ENCODE measurements at regions of chr1 and their contacts with region 1.

Region 1: DNA sequence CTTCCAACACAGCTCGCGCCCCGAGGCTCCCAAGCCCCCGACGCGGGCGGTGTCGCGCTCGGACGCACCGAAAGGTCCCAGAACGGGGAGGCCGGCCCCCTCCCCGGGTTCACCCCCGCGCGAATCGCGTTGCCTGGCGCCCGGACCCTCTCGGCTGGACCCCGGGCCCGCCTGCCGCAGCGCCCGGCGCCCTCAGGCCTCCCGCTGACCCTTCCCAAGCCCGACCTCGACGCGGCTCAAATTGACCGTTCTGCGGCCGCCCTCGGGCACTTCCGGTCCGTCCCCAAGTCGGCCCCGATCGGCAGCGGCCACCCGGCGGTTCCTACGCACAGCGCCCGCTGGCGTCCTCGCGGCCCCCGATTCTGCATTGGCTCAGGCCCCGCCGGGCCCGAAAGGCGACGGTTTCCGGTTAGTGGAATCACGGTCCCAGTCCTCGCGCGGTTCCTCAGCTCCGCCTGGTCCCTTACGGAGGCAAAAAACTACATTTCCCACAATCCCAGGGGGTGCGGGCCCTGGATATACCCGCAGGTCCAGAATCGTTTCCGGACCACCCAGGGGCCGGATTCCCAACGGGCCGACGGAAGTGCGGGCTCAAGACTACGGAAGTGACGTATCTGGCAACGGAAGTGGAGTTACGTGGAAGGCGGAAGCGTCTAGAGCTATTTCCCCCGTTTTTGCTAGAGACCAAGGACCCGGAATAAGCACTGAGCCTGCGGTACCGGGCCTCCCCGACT is at the start of gene AURKAIP1:
- DNase-seq: peak; percentile 100
- H3K4me3 ChIP-seq: peak within 1 kb of the TSS; percentile 81 to 88 (median 84)
- H3K27ac ChIP-seq: peak within 1 kb of the TSS; percentile 71
- H3K4me1 ChIP-seq: peaks cover 13% of the 10 kb centered on the region
- H3K27me3 ChIP-seq: no peaks in the 10 kb centered on the region
- CTCF ChIP-seq: peak; percentile 24 to 45
- POLR2A ChIP-seq: peak; percentile 53
- total RNA-seq, gene AURKAIP1: 149 and 151 TPM in 2 replicates

Region 2: DNA sequence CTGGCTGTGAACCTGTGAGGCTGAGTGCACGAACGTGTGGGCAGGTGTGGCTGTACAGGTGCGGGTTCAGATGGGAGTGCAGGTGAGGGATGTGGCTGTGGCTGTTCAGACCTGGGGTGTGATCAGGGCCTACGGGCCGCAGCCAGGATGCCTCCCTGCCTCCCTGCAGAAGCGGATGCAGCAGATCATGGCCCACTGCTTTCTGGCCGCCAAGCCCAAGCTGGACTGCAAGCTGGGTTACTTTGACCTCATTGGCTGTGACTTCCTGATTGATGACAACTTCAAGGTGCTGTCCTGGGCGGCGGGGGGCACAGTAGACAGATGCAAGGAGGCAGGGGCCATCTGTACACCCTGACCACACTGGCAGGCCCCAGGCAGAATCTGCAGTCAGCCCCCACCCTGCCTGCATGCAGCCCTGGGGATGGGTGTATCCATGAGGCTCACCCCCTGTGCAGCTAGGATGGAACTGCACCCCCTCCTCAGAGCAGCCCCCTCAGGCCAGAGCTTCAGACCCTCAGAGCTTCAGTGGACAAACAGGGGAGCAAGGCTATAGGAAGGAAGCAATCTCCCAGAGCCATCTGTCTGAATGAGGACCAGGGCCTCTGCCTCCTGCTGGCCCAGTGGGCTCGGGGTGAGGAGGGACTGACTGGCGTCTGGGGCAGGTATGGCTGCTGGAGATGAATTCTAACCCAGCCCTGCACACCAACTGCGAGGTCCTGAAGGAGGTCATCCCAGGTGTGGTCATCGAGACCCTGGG is 178.5 kb before region 1 on chr1:
- CTCF ChIA-PET with region 1: no interaction called
- POLR2A ChIA-PET with region 1: no interaction called
- dilution Hi-C with region 1: no loop called
- intact Hi-C with region 1: no loop called
- DNase-seq: no peak
- H3K4me3 ChIP-seq: no peak overlapping the region
- H3K27ac ChIP-seq: no peak overlapping the region
- H3K4me1 ChIP-seq: no peaks in the 10 kb centered on the region
- H3K27me3 ChIP-seq: peaks cover 0 to 1% of the 10 kb centered on the region in 2 experiments
- CTCF ChIP-seq: no peak
- POLR2A ChIP-seq: no peak

Region 3: GRCh38 chr1:1307908-1308755 is 67.0 kb before region 1 on chr1 and contains the starts of genes ACAP3 and PUSL1:
- CTCF ChIA-PET with region 1: interaction called, 3 read pairs
- POLR2A ChIA-PET with region 1: no interaction called
- dilution Hi-C with region 1: no loop called
- intact Hi-C with region 1: loop called (anchors 1 kb)
- DNase-seq: peak; percentile 80
- H3K4me3 ChIP-seq: peak within 1 kb of the TSS; percentile 56 to 94 (median 66)
- H3K27ac ChIP-seq: peak within 1 kb of the TSS; percentile 65
- H3K4me1 ChIP-seq: peaks cover 15% of the 10 kb centered on the region
- H3K27me3 ChIP-seq: no peaks in the 10 kb centered on the region
- CTCF ChIP-seq: no peak
- POLR2A ChIP-seq: peak; percentile 44
- total RNA-seq, gene ACAP3: 39.0 and 43.0 TPM in 2 replicates
- total RNA-seq, gene PUSL1: 16.6 and 18.8 TPM in 2 replicates

Region 4: DNA sequence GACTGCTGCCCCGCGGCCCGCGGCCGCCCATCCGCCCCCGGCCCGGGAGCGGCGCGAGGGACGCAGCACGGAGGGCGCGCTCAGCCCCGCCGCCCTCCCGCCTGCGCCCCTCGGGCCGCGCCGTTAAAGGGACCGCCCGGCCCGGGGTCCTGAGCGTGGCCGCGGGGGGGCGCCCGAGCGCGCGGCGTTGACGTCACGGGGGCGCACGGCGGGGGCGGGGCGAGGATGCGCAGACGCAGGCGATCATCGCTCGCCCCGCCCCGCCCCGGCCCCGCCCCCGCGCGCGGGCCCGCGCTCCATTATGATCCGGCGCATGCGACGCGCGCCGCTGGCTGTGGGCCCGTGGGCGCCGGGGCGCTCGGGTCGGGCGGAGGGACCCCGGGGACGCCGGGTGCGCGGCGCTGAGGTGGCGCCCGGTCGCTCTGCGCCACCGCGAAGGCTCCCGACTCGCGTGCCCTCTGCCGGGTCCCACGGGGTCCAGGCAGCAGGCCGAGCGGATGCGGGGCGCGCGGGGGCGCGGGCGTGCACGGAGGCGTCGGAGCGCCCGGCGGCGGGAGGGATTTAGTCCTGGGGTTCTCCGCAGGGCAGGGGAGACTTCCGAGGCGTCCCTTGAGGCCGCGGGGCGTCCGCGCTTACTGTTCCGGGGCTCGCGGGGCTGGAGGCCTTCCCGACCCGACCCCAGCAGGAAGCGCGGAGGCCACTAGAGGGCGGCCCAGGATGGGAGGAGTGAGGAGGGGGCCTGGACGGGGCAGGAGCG is 25.7 kb before region 1 on chr1 and contains the start of gene DVL1:
- CTCF ChIA-PET with region 1: interaction called, 6 read pairs
- POLR2A ChIA-PET with region 1: no interaction called
- dilution Hi-C with region 1: no loop called
- intact Hi-C with region 1: loop called (anchors 1 kb)
- DNase-seq: peak; percentile 35
- H3K4me3 ChIP-seq: peak within 1 kb of the TSS; percentile 61 to 86 (median 79)
- H3K27ac ChIP-seq: peak within 1 kb of the TSS; percentile 53
- H3K4me1 ChIP-seq: peaks cover 10% of the 10 kb centered on the region
- H3K27me3 ChIP-seq: peaks cover 7 to 16% of the 10 kb centered on the region in 2 experiments
- CTCF ChIP-seq: peak; percentile 22 to 53
- POLR2A ChIP-seq: peak; percentile 67
- total RNA-seq, gene DVL1: 36.5 and 40.7 TPM in 2 replicates

Region 5: DNA sequence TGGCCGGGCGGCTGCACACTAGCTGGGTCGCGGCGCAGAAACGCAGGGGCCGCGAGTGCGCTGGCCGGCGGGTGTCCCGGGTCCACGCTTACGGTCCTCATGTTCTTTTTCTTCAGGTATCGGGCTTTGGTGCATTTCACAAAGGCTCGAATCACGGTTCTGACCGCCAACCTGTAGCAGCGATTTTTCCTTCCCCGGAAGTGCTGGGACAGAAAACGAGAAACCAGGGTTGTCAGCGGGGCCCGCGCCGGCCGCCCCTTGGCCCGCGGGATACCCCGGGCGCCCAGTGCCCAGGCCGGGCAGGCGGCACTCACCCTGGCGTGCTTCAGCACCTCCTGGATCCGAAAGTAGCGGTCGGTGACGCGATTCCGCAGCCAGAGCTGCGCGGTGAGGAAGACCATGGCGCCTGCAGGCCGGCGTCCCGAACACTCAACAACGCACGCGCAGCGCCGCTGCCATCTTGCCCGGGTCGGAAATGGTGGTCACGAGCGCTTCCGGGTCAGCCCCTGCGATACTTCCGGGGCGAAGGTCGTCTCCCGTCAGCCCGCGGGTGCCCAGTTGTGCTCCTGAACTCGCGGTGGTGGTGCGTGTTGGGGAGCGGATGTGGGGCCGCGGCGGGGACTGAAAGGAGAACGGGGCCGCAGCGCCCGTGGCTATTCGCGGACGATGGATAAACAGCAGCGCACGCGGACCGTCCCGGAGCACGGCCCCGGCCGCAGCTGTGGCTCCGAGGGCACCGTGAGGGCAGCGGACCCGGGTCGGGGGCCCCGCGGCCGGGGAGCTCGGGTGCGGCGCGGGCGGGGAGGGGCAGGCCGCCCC is 31.9 kb after region 1 on chr1 and contains the start of gene MRPL20:
- CTCF ChIA-PET with region 1: interaction called, 7 read pairs
- POLR2A ChIA-PET with region 1: interaction called, 4 read pairs
- dilution Hi-C with region 1: no loop called
- intact Hi-C with region 1: loop called (anchors 1 kb)
- DNase-seq: peak; percentile 88
- H3K4me3 ChIP-seq: peak within 1 kb of the TSS; percentile 73 to 87 (median 86)
- H3K27ac ChIP-seq: peak within 1 kb of the TSS; percentile 54
- H3K4me1 ChIP-seq: peaks cover 11% of the 10 kb centered on the region
- H3K27me3 ChIP-seq: no peaks in the 10 kb centered on the region
- CTCF ChIP-seq: no peak
- POLR2A ChIP-seq: peak; percentile 89
- total RNA-seq, gene MRPL20: 125 and 134 TPM in 2 replicates

Region 6: DNA sequence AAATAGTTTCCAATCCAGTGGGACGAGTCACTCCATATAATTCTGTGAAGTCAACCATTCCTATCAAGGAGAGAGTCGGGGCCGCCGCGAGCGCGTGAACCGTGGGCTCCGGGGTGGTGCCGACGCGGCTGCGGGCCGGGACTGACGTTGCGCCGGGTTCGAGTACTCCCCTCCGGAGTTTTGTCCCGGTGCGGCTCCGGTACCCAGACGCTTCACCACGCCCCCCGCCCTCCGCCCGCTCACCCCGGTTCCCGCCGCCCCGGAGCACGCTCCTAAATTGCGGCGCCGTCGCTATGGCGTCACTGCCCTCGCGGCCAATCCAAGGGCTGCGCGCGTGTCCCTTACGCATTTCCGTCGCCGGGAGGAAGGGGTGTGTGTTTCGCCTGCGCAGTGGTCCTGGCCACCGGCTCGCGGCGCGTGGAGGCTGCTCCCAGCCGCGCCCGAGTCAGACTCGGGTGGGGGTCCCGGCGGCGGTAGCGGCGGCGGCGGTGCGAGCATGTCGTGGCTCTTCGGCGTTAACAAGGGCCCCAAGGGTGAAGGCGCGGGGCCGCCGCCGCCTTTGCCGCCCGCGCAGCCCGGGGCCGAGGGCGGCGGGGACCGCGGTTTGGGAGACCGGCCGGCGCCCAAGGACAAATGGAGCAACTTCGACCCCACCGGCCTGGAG is 96.4 kb after region 1 on chr1 and contains the start of gene ATAD3B:
- CTCF ChIA-PET with region 1: no interaction called
- POLR2A ChIA-PET with region 1: no interaction called
- dilution Hi-C with region 1: no loop called
- intact Hi-C with region 1: loop called (anchors 1 kb)
- DNase-seq: peak; percentile 92
- H3K4me3 ChIP-seq: peak within 1 kb of the TSS; percentile 76 to 98 (median 93)
- H3K27ac ChIP-seq: peak within 1 kb of the TSS; percentile 59
- H3K4me1 ChIP-seq: peaks cover 12% of the 10 kb centered on the region
- H3K27me3 ChIP-seq: no peaks in the 10 kb centered on the region
- CTCF ChIP-seq: no peak
- POLR2A ChIP-seq: peak; percentile 71
- total RNA-seq, gene ATAD3B: 45.8 and 48.2 TPM in 2 replicates